CD8-positive, alpha-beta T cell (primary cell): ENCODE measurements at regions of chr15 and their contacts with region 1.

Region 1: DNA sequence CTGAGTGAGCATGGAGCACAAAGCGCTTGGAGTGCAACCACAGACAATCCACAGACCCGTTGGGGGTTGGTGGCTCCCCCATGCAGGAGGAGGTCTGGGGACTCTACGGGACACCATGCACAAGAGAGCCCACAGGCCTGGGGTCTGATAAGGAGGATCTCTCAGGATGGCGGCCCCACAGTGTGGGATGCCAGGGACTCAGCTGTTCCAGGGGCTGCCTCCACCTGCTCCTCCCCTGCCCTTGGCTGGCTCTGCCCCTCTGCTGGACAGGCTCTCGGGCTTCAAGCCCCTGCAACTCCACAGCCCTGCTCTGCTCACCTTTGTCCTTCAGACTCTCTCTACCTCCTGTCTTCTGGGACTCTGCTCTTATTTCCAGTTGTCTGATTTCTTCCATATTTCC is 184.5 kb upstream of the CHRNA7 start:
- DNase-seq: no peak
- ATAC-seq: no peak
- H3K4me3 ChIP-seq: no peak overlapping the region
- H3K4me3 Mint-ChIP-seq: no peak overlapping the region
- H3K27ac ChIP-seq: no peak overlapping the region
- H3K27ac Mint-ChIP-seq: no peak overlapping the region
- H3K4me1 ChIP-seq: no peaks in the 10 kb centered on the region
- H3K4me1 Mint-ChIP-seq: no peaks in the 10 kb centered on the region
- H3K27me3 ChIP-seq: no peaks in the 10 kb centered on the region
- H3K27me3 Mint-ChIP-seq: peaks cover 3% of the 10 kb centered on the region
- CTCF ChIP-seq: no peak

Region 2: GRCh38 chr15:31799715-31800321 is 46.0 kb before region 1 on chr15:
- CTCF ChIA-PET with region 1: no interaction called
- POLR2A ChIA-PET with region 1: no interaction called
- intact Hi-C with region 1: loop called in 1 of 2 experiments (anchors 5 kb)
- DNase-seq: no peak
- ATAC-seq: no peak
- H3K4me3 ChIP-seq: no peak overlapping the region
- H3K4me3 Mint-ChIP-seq: no peak overlapping the region
- H3K27ac ChIP-seq: no peak overlapping the region
- H3K27ac Mint-ChIP-seq: no peak overlapping the region
- H3K4me1 ChIP-seq: no peaks in the 10 kb centered on the region
- H3K4me1 Mint-ChIP-seq: no peaks in the 10 kb centered on the region
- H3K27me3 ChIP-seq: no peaks in the 10 kb centered on the region
- H3K27me3 Mint-ChIP-seq: peaks cover 9% of the 10 kb centered on the region
- CTCF ChIP-seq: no peak